PC-3 (cell line): ENCODE measurements at regions of chr9 and their contacts with region 1.

Region 1: GRCh38 chr9:69745716-69746437 is 13.9 kb downstream of the PTAR1 start:
- DNase-seq: peak; percentile 4
- ATAC-seq: no peak; the same call in 1 of the 2 replicates
- H3K4me3 ChIP-seq: no peak overlapping the region
- H3K27ac ChIP-seq: no peak overlapping the region
- H3K4me1 ChIP-seq: no peaks in the 10 kb centered on the region
- H3K27me3 ChIP-seq: no peaks in the 10 kb centered on the region
- CTCF ChIP-seq: peak; percentile 28; the same call in 1 of the 2 replicates

Region 2: GRCh38 chr9:69877854-69878514 is 132.1 kb after region 1 on chr9:
- CTCF ChIA-PET with region 1: no interaction called
- POLR2A ChIA-PET with region 1: no interaction called
- intact Hi-C with region 1: loop called (anchors 1 kb)
- DNase-seq: peak; percentile 58
- ATAC-seq: peak; percentile 63
- H3K4me3 ChIP-seq: no peak overlapping the region
- H3K27ac ChIP-seq: no peak overlapping the region
- H3K4me1 ChIP-seq: no peaks in the 10 kb centered on the region
- H3K27me3 ChIP-seq: no peaks in the 10 kb centered on the region
- CTCF ChIP-seq: peak; percentile 71